ENCODE measurements at regions of chr20 and their contacts with region 1.

Region 1: DNA sequence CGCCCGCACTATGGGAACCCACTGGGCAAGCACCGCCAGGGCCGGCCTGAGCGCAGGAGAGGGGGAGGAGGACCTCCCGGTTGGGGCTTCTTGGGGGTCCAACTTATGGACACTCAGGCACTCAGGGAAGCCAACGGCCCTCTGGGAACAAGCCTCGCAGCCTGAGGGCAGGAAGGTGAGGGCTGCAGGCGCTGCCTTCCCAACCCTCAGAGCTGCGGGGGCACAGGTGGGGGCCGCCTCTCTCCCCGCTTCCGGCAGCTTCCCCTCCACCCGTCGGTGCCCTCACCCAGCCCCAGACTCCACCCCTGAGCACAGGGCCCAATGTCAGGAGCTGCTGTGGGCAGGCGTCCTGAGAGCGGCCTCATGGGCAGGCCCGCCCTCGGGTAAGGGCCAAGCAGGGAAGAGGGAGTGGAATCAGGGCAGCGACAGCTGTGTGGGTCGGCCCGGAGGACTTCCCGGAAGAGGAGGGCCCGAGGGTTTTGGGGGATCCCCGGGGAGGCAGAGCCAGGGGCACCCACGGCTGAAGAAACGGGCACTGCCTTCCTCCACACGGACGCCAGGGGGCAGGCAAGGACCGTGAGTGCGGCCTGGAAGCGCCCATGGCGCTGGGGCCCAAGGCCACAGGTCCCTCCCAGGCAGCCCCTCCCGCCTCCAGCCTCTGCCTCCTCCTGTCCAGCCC is 488 bp upstream of the PTK6 start:
- DNase-seq: peak; percentile 94 to 97
- H3K4me3 ChIP-seq: peak overlapping the region; percentile 50
- H3K4me3 Mint-ChIP-seq: peak overlapping the region; percentile 65
- H3K27ac Mint-ChIP-seq: peak overlapping the region; percentile 36
- H3K4me1 ChIP-seq: peaks cover 28% of the 10 kb centered on the region
- H3K4me1 Mint-ChIP-seq: no peaks in the 10 kb centered on the region
- H3K27me3 ChIP-seq: no peaks in the 10 kb centered on the region
- H3K27me3 Mint-ChIP-seq: no peaks in the 10 kb centered on the region
- CTCF ChIP-seq: peak; percentile 99 to 100

Region 2: DNA sequence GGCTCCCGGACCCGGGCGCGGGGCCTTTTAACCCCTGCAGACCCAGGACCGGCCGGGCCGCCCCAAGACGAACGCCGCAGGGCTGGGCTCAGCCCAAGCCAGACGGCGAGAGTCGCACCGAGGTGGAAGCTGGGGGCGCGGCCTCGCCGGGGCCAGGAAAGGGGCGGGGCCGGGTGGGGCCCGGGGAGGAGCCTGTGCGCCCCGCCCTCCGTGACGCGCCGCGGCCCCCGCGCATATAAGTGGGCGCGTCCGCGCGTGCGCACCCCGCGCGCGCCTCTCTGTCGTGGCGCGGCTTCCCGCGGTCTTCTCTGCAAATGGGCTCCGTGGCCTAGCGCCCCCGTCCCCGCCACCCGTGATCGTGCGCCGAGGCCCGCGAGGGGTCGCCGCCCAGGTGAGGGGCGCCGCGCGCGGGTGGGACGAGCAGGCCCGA is 17.1 kb before region 1 on chr20 and contains the start of gene PPDPF:
- CTCF ChIA-PET with region 1: interaction called, 20 read pairs
- POLR2A ChIA-PET with region 1: interaction called, 15 read pairs
- intact Hi-C with region 1: no loop called
- DNase-seq: peak in 1 of 2 experiments; percentile 90
- H3K4me3 ChIP-seq: peak within 1 kb of the TSS; percentile 97
- H3K4me3 Mint-ChIP-seq: peak within 1 kb of the TSS; percentile 92
- H3K27ac Mint-ChIP-seq: peak within 1 kb of the TSS; percentile 95
- H3K4me1 ChIP-seq: peaks cover 14% of the 10 kb centered on the region
- H3K4me1 Mint-ChIP-seq: no peaks in the 10 kb centered on the region
- H3K27me3 ChIP-seq: no peaks in the 10 kb centered on the region
- H3K27me3 Mint-ChIP-seq: no peaks in the 10 kb centered on the region
- CTCF ChIP-seq: no peak
- total RNA-seq, gene PPDPF: 511 and 634 TPM in 2 replicates

Region 3: GRCh38 chr20:63580796-63581461 is 43.3 kb after region 1 on chr20:
- CTCF ChIA-PET with region 1: interaction called, 10 read pairs
- POLR2A ChIA-PET with region 1: no interaction called
- intact Hi-C with region 1: loop called (anchors 2 kb)
- DNase-seq: peak; percentile 84 to 86
- H3K4me3 ChIP-seq: no peak overlapping the region
- H3K4me3 Mint-ChIP-seq: no peak overlapping the region
- H3K27ac Mint-ChIP-seq: no peak overlapping the region
- H3K4me1 ChIP-seq: no peaks in the 10 kb centered on the region
- H3K4me1 Mint-ChIP-seq: no peaks in the 10 kb centered on the region
- H3K27me3 ChIP-seq: no peaks in the 10 kb centered on the region
- H3K27me3 Mint-ChIP-seq: peaks cover 3% of the 10 kb centered on the region
- CTCF ChIP-seq: peak; percentile 78 to 92

Region 4: GRCh38 chr20:63641792-63642544 is 104.3 kb after region 1 on chr20:
- CTCF ChIA-PET with region 1: interaction called, 62 read pairs
- POLR2A ChIA-PET with region 1: interaction called, 5 read pairs
- intact Hi-C with region 1: loop called (anchors 5 kb)
- DNase-seq: peak; percentile 100
- H3K4me3 ChIP-seq: peak overlapping the region; percentile 73
- H3K4me3 Mint-ChIP-seq: peak overlapping the region; percentile 79
- H3K27ac Mint-ChIP-seq: peak overlapping the region; percentile 67
- H3K4me1 ChIP-seq: peaks cover 21% of the 10 kb centered on the region
- H3K4me1 Mint-ChIP-seq: peaks cover 8% of the 10 kb centered on the region
- H3K27me3 ChIP-seq: no peaks in the 10 kb centered on the region
- H3K27me3 Mint-ChIP-seq: no peaks in the 10 kb centered on the region
- CTCF ChIP-seq: peak; percentile 72 to 92

Region 5: DNA sequence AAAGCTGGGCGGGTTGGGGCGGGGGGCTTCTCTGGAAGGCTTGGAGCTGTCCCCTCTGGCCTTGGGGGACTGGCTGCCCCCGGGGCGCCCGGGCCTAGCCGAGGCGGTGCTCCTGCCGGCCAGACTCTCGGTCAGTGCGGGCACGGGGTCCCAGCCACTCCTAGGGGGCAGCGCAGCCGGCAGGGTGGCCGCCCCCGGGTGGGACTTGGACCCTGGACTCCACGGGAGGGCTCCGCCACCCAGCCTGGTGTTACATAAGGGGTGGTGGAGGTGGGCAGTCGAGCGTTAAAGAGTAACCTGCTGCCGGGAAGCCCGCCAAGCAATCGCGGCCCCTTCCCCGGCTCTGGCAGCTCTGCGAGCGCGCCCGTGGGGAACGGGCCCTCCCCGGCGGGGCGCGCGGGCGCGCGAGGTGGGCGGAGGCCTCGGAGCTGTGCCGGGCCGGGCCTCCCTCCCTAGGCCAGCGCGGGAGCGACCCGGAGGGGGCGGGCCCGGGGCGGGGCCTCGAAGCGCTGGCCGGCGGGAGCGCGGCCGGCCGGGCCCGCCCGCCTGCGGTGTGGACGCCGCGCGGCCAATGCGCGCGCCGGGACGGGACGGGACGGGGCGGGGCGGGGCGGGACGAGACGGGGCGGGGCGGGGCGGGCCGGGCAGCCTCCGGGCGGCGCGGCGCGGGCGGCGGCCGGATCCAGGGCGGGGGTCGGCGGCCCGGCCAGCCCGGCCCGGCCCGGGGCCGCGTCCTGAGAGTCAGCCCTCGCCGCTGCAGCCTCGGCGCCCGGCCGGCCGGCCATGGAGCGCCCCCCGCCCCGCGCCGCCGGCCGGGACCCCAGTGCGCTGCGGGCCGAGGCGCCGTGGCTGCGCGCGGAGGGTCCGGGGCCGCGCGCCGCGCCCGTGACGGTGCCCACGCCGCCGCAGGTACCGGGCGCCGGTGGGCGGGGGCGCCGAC is 201.7 kb after region 1 on chr20 and contains the start of gene SLC2A4RG:
- CTCF ChIA-PET with region 1: interaction called, 27 read pairs
- POLR2A ChIA-PET with region 1: no interaction called
- intact Hi-C with region 1: no loop called
- DNase-seq: peak; percentile 85 to 96
- H3K4me3 ChIP-seq: peak within 1 kb of the TSS; percentile 72
- H3K4me3 Mint-ChIP-seq: peak within 1 kb of the TSS; percentile 88
- H3K27ac Mint-ChIP-seq: peak within 1 kb of the TSS; percentile 87
- H3K4me1 ChIP-seq: peaks cover 24% of the 10 kb centered on the region
- H3K4me1 Mint-ChIP-seq: no peaks in the 10 kb centered on the region
- H3K27me3 ChIP-seq: no peaks in the 10 kb centered on the region
- H3K27me3 Mint-ChIP-seq: no peaks in the 10 kb centered on the region
- CTCF ChIP-seq: no peak
- total RNA-seq, gene SLC2A4RG: 211 and 234 TPM in 2 replicates

Region 6: GRCh38 chr20:63955827-63956663 is 418.4 kb after region 1 on chr20 and contains the start of gene UCKL1:
- CTCF ChIA-PET with region 1: interaction called, 16 read pairs
- POLR2A ChIA-PET with region 1: interaction called, 6 read pairs
- intact Hi-C with region 1: loop called (anchors 5 kb)
- DNase-seq: peak; percentile 97 to 99
- H3K4me3 ChIP-seq: peak within 1 kb of the TSS; percentile 99
- H3K4me3 Mint-ChIP-seq: peak within 1 kb of the TSS; percentile 89
- H3K27ac Mint-ChIP-seq: peak within 1 kb of the TSS; percentile 94
- H3K4me1 ChIP-seq: peaks cover 22% of the 10 kb centered on the region
- H3K4me1 Mint-ChIP-seq: peaks cover 43% of the 10 kb centered on the region
- H3K27me3 ChIP-seq: no peaks in the 10 kb centered on the region
- H3K27me3 Mint-ChIP-seq: no peaks in the 10 kb centered on the region
- CTCF ChIP-seq: peak in 1 of 2 experiments; percentile 34
- total RNA-seq, gene UCKL1: 101 and 113 TPM in 2 replicates

Region 7: GRCh38 chr20:64038565-64039292 is 501.1 kb after region 1 on chr20:
- CTCF ChIA-PET with region 1: interaction called, 14 read pairs
- POLR2A ChIA-PET with region 1: no interaction called
- intact Hi-C with region 1: loop called (anchors 1 kb)
- DNase-seq: peak; percentile 92 to 97
- H3K4me3 ChIP-seq: peak overlapping the region; percentile 81
- H3K4me3 Mint-ChIP-seq: peak overlapping the region; percentile 87
- H3K27ac Mint-ChIP-seq: peak overlapping the region; percentile 57
- H3K4me1 ChIP-seq: peaks cover 26% of the 10 kb centered on the region
- H3K4me1 Mint-ChIP-seq: no peaks in the 10 kb centered on the region
- H3K27me3 ChIP-seq: no peaks in the 10 kb centered on the region
- H3K27me3 Mint-ChIP-seq: peaks cover 3% of the 10 kb centered on the region
- CTCF ChIP-seq: peak; percentile 83 to 96

Measured in Caco-2 (cell line).